Vagina (tissue), 2 donors: ENCODE measurements at regions of chr3 and their contacts with region 1.

Region 1: GRCh38 chr3:43087249-43087776 is 18.6 kb downstream of the POMGNT2 start:
- DNase-seq: peak; percentile 40 to 82
- H3K4me3 ChIP-seq: no peak overlapping the region
- H3K27ac ChIP-seq: no peak overlapping the region
- H3K4me1 ChIP-seq: no peaks in the 10 kb centered on the region
- H3K27me3 ChIP-seq: no peaks in the 10 kb centered on the region
- CTCF ChIP-seq: no peak
- POLR2A ChIP-seq: no peak

Region 2: DNA sequence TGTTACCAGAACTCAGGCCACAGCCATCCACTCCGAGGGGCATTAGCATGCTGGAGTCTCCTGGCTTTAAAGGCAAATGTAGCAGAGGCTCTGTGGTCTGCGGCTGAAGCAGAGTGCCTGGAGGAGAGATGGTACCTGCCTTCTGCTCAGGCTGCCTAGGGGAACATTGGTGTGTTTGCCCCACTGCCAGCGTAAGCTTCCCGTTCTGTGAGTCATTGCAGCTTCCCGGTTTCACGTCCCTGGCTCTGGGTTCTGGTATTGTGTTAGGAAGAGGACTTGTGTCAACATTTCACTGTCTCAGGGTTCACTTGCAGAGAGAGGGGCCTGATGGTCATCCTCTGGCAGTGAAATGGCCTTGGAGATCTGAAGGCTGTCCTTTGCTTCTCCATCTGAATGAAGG is 106.4 kb before region 1 on chr3:
- intact Hi-C with region 1: loop called (anchors 5 kb)
- DNase-seq: no peak
- H3K4me3 ChIP-seq: peak overlapping the region; percentile 57 to 58
- H3K27ac ChIP-seq: peak overlapping the region; percentile 2
- H3K4me1 ChIP-seq: peaks cover 13% of the 10 kb centered on the region
- H3K27me3 ChIP-seq: no peaks in the 10 kb centered on the region
- CTCF ChIP-seq: no peak
- POLR2A ChIP-seq: no peak